GM13976 (cell line): ENCODE measurements at regions of chr15 and their contacts with region 1.

Region 1: GRCh38 chr15:43903864-43904290 is 77.1 kb downstream of the WDR76 start:
- DNase-seq: peak; percentile 79
- CTCF ChIP-seq: peak; percentile 73

Region 2: DNA sequence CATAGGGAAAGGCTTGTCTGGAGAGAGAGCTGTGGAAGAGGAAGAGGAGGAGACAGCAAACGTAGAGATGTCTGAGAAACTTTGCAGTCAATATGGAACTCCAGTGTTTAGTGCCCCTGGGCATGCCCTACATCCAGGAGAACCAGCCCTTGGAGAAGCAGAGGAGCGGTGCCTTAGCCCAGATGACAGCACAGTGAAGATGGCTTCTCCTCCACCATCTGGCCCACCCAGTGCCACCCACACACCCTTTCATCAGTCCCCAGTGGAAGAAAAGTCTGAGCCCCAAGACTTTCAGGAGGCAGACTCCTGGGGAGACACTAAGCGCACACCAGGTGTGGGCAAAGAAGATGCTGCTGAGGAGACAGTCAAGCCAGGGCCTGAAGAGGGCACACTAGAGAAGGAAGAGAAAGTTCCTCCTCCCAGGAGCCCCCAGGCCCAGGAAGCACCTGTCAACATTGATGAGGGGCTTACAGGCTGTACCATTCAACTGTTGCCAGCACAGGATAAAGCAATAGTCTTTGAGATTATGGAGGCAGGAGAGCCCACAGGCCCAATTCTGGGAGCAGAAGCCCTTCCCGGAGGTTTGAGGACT is 379.5 kb before region 1 on chr15:
- in situ Hi-C with region 1: no loop called
- DNase-seq: peak; percentile 20
- CTCF ChIP-seq: no peak

Region 3: DNA sequence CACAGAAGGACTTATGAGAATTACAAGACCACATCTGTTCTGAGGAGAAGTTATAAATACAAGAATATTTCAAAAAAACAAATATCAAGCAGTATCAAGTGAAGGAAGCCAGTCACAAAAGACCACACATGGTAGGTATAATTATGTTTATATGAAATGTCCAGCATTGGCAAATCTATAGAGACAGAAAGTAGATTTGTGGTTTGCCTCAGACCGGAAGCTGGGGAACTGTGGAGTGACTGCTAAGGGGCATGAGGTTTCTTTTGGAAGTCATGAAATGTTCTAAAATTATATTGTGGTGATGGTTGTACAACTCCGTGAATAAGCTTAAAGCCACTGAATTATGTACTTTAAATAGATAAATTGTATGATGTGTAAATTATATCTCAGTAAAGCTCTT is 154.2 kb after region 1 on chr15:
- in situ Hi-C with region 1: loop called (anchors 10 kb)
- DNase-seq: no peak
- CTCF ChIP-seq: no peak

Region 4: DNA sequence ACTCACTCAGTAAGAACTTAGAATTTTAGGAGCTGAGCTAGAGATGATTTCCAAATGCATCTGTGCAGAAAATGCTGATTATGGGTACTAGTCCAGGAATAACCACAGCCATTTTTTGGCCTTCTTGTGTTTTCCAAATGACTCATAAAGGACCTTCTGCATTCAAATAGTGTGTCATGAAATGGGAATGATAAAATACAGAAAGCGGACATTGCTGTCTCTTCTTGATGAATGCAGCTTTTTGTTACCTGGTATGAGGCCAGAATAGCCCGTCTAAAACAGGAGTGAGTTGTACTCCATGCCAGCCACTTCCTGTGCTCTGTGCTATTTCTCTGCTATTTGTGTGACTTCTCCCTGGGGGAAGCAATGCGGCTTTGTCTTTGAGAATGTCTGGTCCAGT is 311.7 kb after region 1 on chr15:
- in situ Hi-C with region 1: loop called (anchors 25 kb)
- DNase-seq: no peak
- CTCF ChIP-seq: no peak

Region 5: DNA sequence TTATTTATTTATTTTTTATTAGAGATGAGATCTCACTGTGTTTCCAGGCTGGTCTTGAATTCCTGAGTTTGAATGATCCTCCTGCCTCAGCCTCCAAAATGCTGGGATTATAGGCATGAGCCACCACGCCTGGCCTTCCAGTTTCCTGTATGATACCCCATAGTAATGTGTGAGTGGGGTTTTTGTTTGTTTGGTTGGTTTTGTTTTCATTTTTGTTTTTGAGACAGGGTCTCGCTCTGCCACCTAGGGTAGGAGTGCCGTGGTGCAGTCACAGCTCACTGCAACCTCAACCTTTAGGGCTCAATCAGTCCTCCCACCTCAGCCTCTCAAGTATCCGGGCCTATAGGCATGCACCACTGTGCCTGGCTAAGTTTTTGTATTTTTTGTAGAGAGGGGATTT is 415.5 kb after region 1 on chr15:
- in situ Hi-C with region 1: loop called (anchors 25 kb)
- DNase-seq: peak; percentile 52
- CTCF ChIP-seq: peak; percentile 82

Region 6: DNA sequence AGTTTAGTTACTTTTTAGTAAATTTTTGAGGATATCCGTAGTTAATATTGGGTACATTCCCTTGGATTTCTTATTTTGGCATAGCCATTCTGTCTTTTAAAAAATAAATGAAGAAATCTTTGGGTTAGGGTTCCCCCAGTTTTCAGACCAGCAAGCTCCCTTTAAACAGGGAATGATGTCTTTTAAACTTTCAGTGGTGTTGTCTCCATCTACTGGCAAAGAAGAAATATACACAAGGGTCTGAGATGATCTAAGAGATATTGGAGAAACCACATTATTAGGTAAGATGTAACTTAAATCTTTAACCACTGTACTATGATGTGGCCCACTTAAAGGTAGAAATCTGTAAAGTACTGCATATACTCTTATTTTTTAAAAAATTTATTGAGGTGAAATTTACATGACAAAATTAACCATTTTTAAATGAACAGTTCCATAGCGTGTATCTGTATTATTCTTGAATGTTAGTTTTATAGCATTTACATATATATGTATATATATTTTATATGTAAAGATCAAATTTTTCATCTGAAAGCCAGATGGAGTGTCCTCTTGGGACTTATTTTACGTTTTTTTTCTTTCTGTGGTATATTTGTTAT is 598.0 kb after region 1 on chr15:
- in situ Hi-C with region 1: loop called (anchors 10 kb)
- DNase-seq: peak; percentile 55
- CTCF ChIP-seq: peak; percentile 24